Mammary epithelial cell (primary cell): ENCODE measurements at regions of chr19 and their contacts with region 1.

Region 1: DNA sequence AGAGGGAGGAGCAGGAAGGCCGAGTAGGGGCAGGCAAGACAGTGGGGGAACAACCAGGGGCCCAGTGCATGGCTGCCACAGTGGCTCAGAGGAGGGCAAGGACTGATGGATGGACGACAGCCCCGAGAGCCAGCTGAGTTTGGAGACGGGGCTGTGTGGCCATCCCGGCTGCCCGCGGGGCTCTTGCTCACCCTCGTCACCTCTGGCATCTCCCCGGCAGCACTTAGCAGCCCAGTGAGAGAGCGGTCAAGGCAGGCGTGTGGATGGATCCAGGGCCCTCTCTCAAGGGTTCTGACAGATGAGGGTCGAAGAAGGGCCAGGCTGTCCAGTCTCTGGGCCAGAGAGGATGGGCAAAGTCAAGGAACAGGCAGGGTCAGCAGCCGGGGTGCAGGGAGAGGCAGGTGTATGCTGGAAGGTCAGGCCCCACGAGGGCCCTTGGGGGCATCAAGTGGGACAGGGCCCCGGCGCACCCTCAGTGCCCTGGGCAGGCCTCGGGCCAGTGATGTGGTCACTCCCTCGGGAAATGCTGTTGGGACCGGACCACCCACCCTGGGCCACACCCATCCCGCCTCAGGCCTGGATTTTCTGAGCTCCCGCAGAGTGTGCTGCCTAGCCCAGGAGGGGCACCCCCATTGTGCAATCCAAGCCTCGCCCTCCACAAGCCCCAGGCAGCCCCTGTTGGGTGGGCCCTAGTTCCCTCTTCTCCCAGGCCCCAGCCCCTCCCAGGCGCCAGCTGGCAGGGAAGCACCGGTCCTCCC is 56.4 kb upstream of the TPM4 start:
- DNase-seq: no peak
- H3K4me3 ChIP-seq: no peak overlapping the region
- H3K27ac ChIP-seq: no peak overlapping the region
- H3K4me1 ChIP-seq: no peaks in the 10 kb centered on the region
- H3K27me3 ChIP-seq: no peaks in the 10 kb centered on the region
- CTCF ChIP-seq: no peak

Region 2: GRCh38 chr19:16106121-16106520 is 86.3 kb after region 1 on chr19:
- CTCF ChIA-PET with region 1: no interaction called
- dilution Hi-C with region 1: loop called (anchors 5 kb)
- in situ Hi-C with region 1: no loop called
- intact Hi-C with region 1: no loop called
- DNase-seq: peak; percentile 82
- H3K4me3 ChIP-seq: no peak overlapping the region
- H3K27ac ChIP-seq: no peak overlapping the region
- H3K4me1 ChIP-seq: no peaks in the 10 kb centered on the region
- H3K27me3 ChIP-seq: no peaks in the 10 kb centered on the region
- CTCF ChIP-seq: no peak